ENCODE measurements at regions of chr16 and their contacts with region 1.

Region 1: DNA sequence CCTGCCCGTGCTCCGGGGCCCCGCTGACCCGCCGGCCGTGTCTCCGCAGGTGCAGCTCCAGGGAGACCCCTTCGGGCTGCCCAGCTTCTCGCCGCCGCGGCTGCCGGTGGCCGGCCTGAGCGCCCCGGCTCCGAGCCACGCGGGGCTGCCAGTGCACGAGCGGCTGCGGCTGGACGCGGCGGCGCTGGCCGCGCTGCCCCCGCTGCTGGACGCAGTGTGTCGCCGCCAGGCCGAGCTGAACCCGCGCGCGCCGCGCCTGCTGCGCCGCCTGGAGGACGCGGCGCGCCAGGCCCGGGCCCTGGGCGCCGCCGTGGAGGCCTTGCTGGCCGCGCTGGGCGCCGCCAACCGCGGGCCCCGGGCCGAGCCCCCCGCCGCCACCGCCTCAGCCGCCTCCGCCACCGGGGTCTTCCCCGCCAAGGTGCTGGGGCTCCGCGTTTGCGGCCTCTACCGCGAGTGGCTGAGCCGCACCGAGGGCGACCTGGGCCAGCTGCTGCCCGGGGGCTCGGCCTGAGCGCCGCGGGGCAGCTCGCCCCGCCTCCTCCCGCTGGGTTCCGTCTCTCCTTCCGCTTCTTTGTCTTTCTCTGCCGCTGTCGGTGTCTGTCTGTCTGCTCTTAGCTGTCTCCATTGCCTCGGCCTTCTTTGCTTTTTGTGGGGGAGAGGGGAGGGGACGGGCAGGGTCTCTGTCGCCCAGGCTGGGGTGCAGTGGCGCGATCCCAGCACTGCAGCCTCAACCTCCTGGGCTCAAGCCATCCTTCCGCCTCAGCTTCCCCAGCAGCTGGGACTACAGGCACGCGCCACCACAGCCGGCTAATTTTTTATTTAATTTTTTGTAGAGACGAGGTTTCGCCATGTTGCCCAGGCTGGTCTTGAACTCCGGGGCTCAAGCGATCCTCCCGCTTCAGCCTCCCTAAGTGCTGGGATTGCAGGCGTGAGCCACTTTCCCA is 5.9 kb downstream of the CTF1 start:
- DNase-seq: peak in 1 of 2 experiments; percentile 81
- H3K4me3 ChIP-seq: peak overlapping the region; percentile 42 to 67 (median 53)
- H3K27ac ChIP-seq: peak overlapping the region; percentile 18; the same call in 1 of the 2 replicates
- H3K4me1 ChIP-seq: peaks cover 2 to 5% (median 4%) of the 10 kb centered on the region in 4 experiments; a peak in 5 of 7 replicates
- H3K27me3 ChIP-seq: peaks cover 0 to 19% (median 3%) of the 10 kb centered on the region in 4 experiments; a peak in 4 of 7 replicates
- CTCF ChIP-seq: peak; percentile 43 to 72 (median 69)
- EP300 ChIP-seq: 0 out of 3 replicates have a peak, but pooled peaks of 1 of the 2 experiments have one; percentile 8
- POLR2A ChIP-seq: no peak
- RAD21 ChIP-seq: peak in 1 of 2 experiments; percentile 51; a peak in 2 of 4 replicates

Region 2: DNA sequence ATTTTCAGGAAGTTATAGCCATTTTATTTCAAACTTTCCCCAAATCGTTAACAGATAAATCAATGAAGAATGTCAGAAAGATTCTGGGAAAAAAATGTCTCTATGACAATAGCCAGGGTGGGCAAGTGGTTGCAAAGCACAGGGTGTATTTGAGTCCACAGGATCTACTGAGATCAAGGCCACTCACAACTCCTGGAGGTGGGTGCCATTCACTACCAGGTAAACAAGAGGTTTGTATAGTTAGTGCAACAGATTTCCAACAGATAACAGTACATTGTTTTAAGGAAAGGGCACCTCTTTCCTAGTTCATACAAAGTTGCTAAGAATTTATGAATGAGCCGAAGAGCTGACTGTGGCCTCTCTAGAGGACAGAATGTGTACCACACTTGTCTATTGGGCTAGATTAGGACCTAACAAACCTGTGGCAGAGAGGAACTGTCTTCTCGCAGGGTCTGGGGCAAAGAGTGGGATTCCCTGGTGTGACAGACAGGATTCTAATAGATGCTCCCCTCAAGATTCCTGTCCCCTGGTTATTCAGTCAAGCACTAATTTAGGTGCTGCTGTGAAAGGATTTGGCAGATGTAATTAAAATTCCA is 63.3 kb before region 1 on chr16:
- CTCF ChIA-PET with region 1: interaction called, 69 read pairs
- POLR2A ChIA-PET with region 1: interaction called, 7 read pairs
- DNase-seq: no peak
- H3K4me3 ChIP-seq: no peak overlapping the region
- H3K27ac ChIP-seq: no peak overlapping the region
- H3K4me1 ChIP-seq: no peaks in the 10 kb centered on the region
- H3K27me3 ChIP-seq: no peaks in the 10 kb centered on the region
- CTCF ChIP-seq: no peak
- EP300 ChIP-seq: no peak
- POLR2A ChIP-seq: no peak
- RAD21 ChIP-seq: no peak

Region 3: GRCh38 chr16:30853758-30854157 is 48.5 kb before region 1 on chr16:
- CTCF ChIA-PET with region 1: interaction called, 17 read pairs
- POLR2A ChIA-PET with region 1: no interaction called
- DNase-seq: no peak
- H3K4me3 ChIP-seq: no peak overlapping the region
- H3K27ac ChIP-seq: no peak overlapping the region
- H3K4me1 ChIP-seq: no peaks in the 10 kb centered on the region
- H3K27me3 ChIP-seq: peaks cover 0 to 8% (median 5%) of the 10 kb centered on the region in 4 experiments; a peak in 3 of 7 replicates
- CTCF ChIP-seq: no peak
- EP300 ChIP-seq: no peak
- POLR2A ChIP-seq: no peak
- RAD21 ChIP-seq: no peak

Region 4: GRCh38 chr16:30912794-30913412 is 10.6 kb after region 1 on chr16:
- CTCF ChIA-PET with region 1: interaction called, 22 read pairs
- POLR2A ChIA-PET with region 1: interaction called, 6 read pairs
- DNase-seq: no peak
- H3K4me3 ChIP-seq: no peak overlapping the region
- H3K27ac ChIP-seq: no peak overlapping the region
- H3K4me1 ChIP-seq: peaks cover 0 to 9% (median 7%) of the 10 kb centered on the region in 4 experiments; a peak in 6 of 7 replicates
- H3K27me3 ChIP-seq: no peaks in the 10 kb centered on the region
- CTCF ChIP-seq: no peak
- EP300 ChIP-seq: no peak
- POLR2A ChIP-seq: no peak
- RAD21 ChIP-seq: no peak